ENCODE measurements at regions of chr7 and their contacts with region 1.

Region 1: GRCh38 chr7:130896898-130897514 is 163.0 kb upstream of the KLF14 start:
- DNase-seq: peak; percentile 86
- ATAC-seq: peak; percentile 11
- H3K4me3 ChIP-seq: no peak overlapping the region
- H3K27ac ChIP-seq: peak overlapping the region; percentile 99
- H3K4me1 ChIP-seq: peaks cover 88 to 99% of the 10 kb centered on the region in 2 experiments
- H3K27me3 ChIP-seq: no peaks in the 10 kb centered on the region
- CTCF ChIP-seq: peak in 2 of 3 experiments; percentile 73 to 78; a peak in 4 of 6 replicates
- POLR2A ChIP-seq: peak; percentile 9
- RAD21 ChIP-seq: no peak

Region 2: DNA sequence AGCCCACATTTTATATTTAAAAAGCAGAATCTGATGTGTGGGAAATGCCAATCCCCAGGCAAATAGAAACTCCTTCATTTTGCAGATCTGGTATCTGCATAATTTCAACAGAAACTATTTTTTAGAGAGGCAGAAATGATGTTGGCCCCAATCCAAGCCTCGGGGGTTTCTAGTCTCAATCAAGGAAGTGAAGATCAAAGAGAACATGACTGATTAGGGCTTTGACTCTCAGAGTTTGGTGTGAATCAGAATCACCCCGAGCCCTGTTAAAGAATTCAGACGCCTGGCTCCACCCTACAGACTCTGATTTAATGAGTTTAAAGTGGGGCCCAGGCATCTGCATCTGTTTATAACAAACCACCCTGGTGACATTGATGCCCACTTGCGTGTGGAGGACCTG is 907.5 kb before region 1 on chr7:
- CTCF ChIA-PET with region 1: no interaction called
- POLR2A ChIA-PET with region 1: no interaction called
- RAD21 ChIA-PET with region 1: no interaction called
- intact Hi-C with region 1: no loop called
- DNase-seq: peak; percentile 46
- ATAC-seq: peak; percentile 62
- H3K4me3 ChIP-seq: no peak overlapping the region
- H3K27ac ChIP-seq: no peak overlapping the region; the same call in 1 of the 2 replicates
- H3K4me1 ChIP-seq: peaks cover 16 to 41% of the 10 kb centered on the region in 2 experiments
- H3K27me3 ChIP-seq: no peaks in the 10 kb centered on the region
- CTCF ChIP-seq: no peak
- POLR2A ChIP-seq: no peak
- RAD21 ChIP-seq: no peak

Region 3: DNA sequence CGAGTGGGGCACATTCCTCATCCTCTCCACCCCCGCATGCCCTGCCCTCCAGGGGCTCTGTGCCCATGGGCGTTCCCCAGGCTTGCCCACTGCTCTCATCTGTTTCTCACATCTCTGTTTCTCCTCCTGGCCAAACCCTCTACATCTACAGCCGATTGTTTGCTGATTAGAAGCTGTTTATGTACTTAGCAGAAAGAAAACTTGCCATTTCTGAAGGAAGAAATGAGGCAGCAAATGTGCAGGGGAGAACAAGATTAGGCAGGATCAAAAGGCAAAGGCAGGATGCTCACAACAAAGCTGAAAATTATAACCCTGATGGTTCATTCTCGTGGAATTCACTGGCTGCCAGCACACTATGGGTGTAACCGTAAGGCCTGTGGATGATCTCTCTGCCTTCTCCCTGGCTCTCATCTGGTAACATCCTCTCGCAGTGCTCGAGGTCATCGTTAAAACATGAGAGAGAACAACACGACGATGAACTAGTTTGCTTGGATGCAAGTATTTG is 51.4 kb before region 1 on chr7:
- CTCF ChIA-PET with region 1: interaction called, 5 read pairs
- POLR2A ChIA-PET with region 1: no interaction called
- RAD21 ChIA-PET with region 1: no interaction called
- intact Hi-C with region 1: loop called (anchors 2 kb)
- DNase-seq: peak; percentile 88
- ATAC-seq: peak; percentile 90
- H3K4me3 ChIP-seq: peak overlapping the region; percentile 11 to 15; a peak in 3 of 4 replicates
- H3K27ac ChIP-seq: peak overlapping the region; percentile 94
- H3K4me1 ChIP-seq: peaks cover 44 to 91% of the 10 kb centered on the region in 2 experiments
- H3K27me3 ChIP-seq: no peaks in the 10 kb centered on the region
- CTCF ChIP-seq: no peak
- POLR2A ChIP-seq: peak; percentile 59
- RAD21 ChIP-seq: no peak

Region 4: DNA sequence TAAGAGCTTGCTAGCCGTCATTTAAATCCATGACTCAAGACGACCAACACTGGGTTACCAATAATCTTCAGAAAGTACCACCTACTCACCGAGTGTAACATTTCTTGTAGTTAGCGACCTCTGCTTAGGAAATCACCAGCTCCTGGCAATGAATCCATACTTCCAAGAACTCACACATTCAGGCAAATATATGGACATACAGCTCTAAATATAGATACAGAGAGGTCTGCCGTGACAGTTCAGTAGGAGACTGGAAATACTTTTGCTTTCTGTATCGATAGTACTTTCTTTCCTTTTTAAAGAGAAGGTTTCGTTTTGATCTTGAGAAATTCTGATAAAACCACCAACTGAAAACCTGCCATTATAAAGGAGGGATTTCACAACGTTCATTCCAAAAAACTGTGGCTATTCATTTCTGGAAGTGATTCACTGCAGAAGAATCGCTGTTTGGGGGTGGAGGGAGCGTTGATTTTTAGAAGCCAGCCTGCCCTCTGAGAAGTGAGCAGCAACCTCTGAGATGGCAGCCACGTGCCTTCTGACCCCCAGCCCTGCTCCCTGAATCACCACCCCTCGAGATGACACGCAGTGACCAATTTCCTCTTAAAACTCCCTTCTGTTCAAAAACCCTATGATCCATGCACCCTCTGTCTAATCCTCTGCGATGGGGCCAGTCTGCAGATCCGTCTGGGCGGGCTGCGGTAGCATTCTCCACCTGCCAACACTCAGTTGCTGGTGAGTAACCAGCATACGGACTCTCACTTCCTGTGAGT is 16.0 kb after region 1 on chr7:
- CTCF ChIA-PET with region 1: interaction called, 13 read pairs
- POLR2A ChIA-PET with region 1: interaction called, 227 read pairs
- RAD21 ChIA-PET with region 1: interaction called, 4 to 6 read pairs
- intact Hi-C with region 1: no loop called
- DNase-seq: peak; percentile 91
- ATAC-seq: peak; percentile 56
- H3K4me3 ChIP-seq: peak overlapping the region; percentile 40 to 41
- H3K27ac ChIP-seq: peak overlapping the region; percentile 99
- H3K4me1 ChIP-seq: peaks cover 91 to 99% of the 10 kb centered on the region in 2 experiments
- H3K27me3 ChIP-seq: no peaks in the 10 kb centered on the region
- CTCF ChIP-seq: no peak
- POLR2A ChIP-seq: no peak
- RAD21 ChIP-seq: no peak

Region 5: GRCh38 chr7:130982160-130982638 is 85.2 kb after region 1 on chr7:
- CTCF ChIA-PET with region 1: interaction called, 14 read pairs
- POLR2A ChIA-PET with region 1: no interaction called
- RAD21 ChIA-PET with region 1: no interaction called
- intact Hi-C with region 1: no loop called
- DNase-seq: no peak
- ATAC-seq: peak; percentile 79
- H3K4me3 ChIP-seq: no peak overlapping the region
- H3K27ac ChIP-seq: peak overlapping the region; percentile 67
- H3K4me1 ChIP-seq: peaks cover 57 to 84% of the 10 kb centered on the region in 2 experiments
- H3K27me3 ChIP-seq: no peaks in the 10 kb centered on the region
- CTCF ChIP-seq: peak; percentile 75 to 85 (median 81)
- POLR2A ChIP-seq: no peak
- RAD21 ChIP-seq: peak; percentile 91

Region 6: GRCh38 chr7:131007394-131008330 is 110.7 kb after region 1 on chr7:
- CTCF ChIA-PET with region 1: interaction called, 15 read pairs
- POLR2A ChIA-PET with region 1: interaction called, 6 read pairs
- RAD21 ChIA-PET with region 1: no interaction called
- intact Hi-C with region 1: loop called (anchors 2 kb)
- DNase-seq: peak; percentile 85
- ATAC-seq: peak; percentile 67
- H3K4me3 ChIP-seq: peak overlapping the region in 1 of 2 experiments; percentile 3; a peak in 1 of 4 replicates
- H3K27ac ChIP-seq: peak overlapping the region; percentile 96
- H3K4me1 ChIP-seq: peaks cover 94 to 97% of the 10 kb centered on the region in 2 experiments
- H3K27me3 ChIP-seq: no peaks in the 10 kb centered on the region
- CTCF ChIP-seq: peak in 2 of 3 experiments; percentile 48 to 60; a peak in 4 of 6 replicates
- POLR2A ChIP-seq: no peak
- RAD21 ChIP-seq: no peak

Region 7: GRCh38 chr7:131068604-131069021 is 171.6 kb after region 1 on chr7:
- CTCF ChIA-PET with region 1: interaction called, 16 read pairs
- POLR2A ChIA-PET with region 1: no interaction called
- RAD21 ChIA-PET with region 1: no interaction called
- intact Hi-C with region 1: no loop called
- DNase-seq: no peak
- ATAC-seq: peak; percentile 53
- H3K4me3 ChIP-seq: no peak overlapping the region
- H3K27ac ChIP-seq: no peak overlapping the region
- H3K4me1 ChIP-seq: peaks cover 22 to 35% of the 10 kb centered on the region in 2 experiments
- H3K27me3 ChIP-seq: no peaks in the 10 kb centered on the region
- CTCF ChIP-seq: peak; percentile 16 to 43 (median 39); a peak in 3 of 6 replicates
- POLR2A ChIP-seq: no peak
- RAD21 ChIP-seq: peak; percentile 63

Region 8: DNA sequence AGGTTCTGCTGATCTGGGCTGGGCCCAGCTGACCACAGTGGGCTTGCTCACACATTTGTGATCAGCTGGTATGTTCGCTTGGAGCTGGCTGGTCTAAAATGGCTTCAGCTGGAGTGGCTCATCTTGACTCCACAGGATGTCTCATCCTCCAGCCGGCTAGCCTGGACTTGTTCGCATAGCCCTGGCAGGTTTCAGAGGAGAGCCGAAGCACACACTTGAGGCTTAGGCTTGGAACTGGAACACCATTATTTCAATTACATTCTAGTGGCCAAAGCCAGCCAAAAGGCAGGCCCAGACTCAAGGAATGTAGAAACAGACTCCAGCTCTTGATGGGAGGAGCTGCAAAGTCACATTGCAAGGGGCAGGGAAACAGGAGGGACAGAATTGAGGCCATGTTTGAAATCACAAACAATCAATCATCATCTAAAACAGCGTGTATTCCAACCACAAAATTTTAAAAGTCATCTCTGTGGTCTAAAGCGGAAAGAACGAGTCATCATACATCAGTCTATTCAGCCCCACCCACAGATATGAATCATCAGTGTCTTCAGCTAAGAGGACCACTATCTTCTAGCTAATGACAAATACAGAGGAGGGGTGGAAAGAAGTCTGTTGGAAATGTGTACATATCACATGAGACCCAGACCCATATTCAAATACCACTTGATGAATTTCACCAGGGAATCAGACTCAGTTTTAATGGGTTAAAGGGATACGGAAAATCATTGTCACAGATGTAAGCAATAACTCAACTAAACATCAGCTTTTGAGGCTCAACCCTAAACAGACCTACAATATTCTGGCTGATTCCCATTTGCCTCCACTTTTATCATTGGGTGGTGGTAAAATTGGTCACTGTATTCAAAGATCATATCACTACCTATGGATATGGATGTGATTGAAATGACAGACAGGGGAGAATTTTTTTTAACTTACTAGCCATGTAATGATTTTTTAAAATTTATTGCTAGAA is 291.6 kb after region 1 on chr7:
- CTCF ChIA-PET with region 1: no interaction called
- POLR2A ChIA-PET with region 1: no interaction called
- RAD21 ChIA-PET with region 1: no interaction called
- intact Hi-C with region 1: loop called (anchors 5 kb)
- DNase-seq: peak; percentile 93
- ATAC-seq: peak; percentile 81
- H3K4me3 ChIP-seq: peak overlapping the region in 1 of 2 experiments; percentile 7; a peak in 1 of 4 replicates
- H3K27ac ChIP-seq: peak overlapping the region; percentile 87
- H3K4me1 ChIP-seq: peaks cover 41 to 42% of the 10 kb centered on the region in 2 experiments
- H3K27me3 ChIP-seq: no peaks in the 10 kb centered on the region
- CTCF ChIP-seq: no peak
- POLR2A ChIP-seq: no peak
- RAD21 ChIP-seq: peak; percentile 39

Measured in HCT116 (cell line).